Activated CD8-positive, alpha-beta memory T cell treated with anti-CD3 and anti-CD28 coated beads, Interleukin-2, amount 10 ng/mL, durations not matched to agents 7 days and 5 days (primary cell): ENCODE measurements at regions of chr14 and their contacts with region 1.

Region 1: GRCh38 chr14:95515596-95516552 is 576 bp downstream of the SYNE3 start:
- DNase-seq: peak; percentile 90
- ATAC-seq: peak; percentile 83
- H3K4me3 Mint-ChIP-seq: peak overlapping the region; percentile 96
- H3K27ac Mint-ChIP-seq: peak overlapping the region; percentile 84
- H3K4me1 Mint-ChIP-seq: peaks cover 74% of the 10 kb centered on the region
- H3K27me3 Mint-ChIP-seq: no peaks in the 10 kb centered on the region

Region 2: GRCh38 chr14:95291859-95292542 is 223.9 kb before region 1 on chr14:
- CTCF ChIA-PET with region 1: no interaction called
- DNase-seq: no peak
- ATAC-seq: no peak
- H3K4me3 Mint-ChIP-seq: no peak overlapping the region
- H3K27ac Mint-ChIP-seq: no peak overlapping the region
- H3K4me1 Mint-ChIP-seq: no peaks in the 10 kb centered on the region
- H3K27me3 Mint-ChIP-seq: peaks cover 26% of the 10 kb centered on the region

Region 3: DNA sequence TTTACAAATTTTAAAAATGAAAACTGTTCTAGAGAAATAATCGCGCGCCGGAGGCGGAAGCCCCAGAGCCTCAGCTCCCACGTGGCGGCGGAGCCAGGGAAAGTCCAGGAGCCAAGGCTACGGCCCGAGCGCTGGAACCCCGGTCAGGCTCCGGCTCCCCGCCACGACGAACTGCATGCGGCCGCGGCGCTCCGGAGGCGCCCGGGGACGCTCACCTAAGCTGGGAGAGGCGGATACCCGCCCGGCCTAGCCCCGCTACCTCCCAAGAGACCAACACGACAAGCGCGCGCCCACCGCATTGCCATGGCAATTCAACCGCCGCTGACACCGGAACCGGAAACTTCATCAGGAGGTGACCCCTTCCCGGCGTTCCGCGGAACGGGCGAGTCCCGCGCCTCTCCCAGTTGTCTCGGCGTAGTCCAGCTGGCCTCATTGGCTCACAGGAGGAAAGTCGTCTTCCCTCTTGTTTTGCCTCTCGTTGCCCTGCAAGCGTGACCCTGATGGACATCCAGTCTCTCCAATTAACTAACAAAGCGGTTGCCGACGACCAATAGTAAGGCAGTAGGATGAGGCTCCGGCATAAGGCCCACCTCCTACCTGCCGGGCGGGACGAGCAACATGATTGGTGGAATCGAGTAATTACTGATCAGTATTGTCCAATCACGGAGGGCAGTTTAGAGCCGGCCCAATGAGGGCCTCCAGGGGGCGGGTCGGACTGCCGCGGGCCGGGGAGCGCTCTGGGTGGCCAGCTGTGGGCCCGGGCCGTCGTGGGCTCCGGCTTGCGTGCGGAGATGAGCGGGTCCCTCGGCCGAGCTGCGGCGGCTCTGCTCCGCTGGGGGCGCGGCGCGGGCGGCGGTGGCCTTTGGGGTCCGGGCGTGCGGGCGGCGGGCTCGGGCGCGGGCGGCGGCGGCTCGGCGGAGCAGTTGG is 18.7 kb after region 1 on chr14 and contains the start of gene GLRX5:
- CTCF ChIA-PET with region 1: interaction called, 18 read pairs
- DNase-seq: peak; percentile 99
- ATAC-seq: peak; percentile 89
- H3K4me3 Mint-ChIP-seq: peak within 1 kb of the TSS; percentile 94
- H3K27ac Mint-ChIP-seq: peak within 1 kb of the TSS; percentile 84
- H3K4me1 Mint-ChIP-seq: peaks cover 66% of the 10 kb centered on the region
- H3K27me3 Mint-ChIP-seq: no peaks in the 10 kb centered on the region
- total RNA-seq, gene GLRX5: 36.4 to 48.5 TPM